Activated CD4-positive, alpha-beta T cell treated with anti-CD3 and anti-CD28 coated beads, Interleukin-2, amount 10 ng/mL, durations not matched to agents 24 days and 14 days (primary cell): ENCODE measurements at regions of chr19 and their contacts with region 1.

Region 1: DNA sequence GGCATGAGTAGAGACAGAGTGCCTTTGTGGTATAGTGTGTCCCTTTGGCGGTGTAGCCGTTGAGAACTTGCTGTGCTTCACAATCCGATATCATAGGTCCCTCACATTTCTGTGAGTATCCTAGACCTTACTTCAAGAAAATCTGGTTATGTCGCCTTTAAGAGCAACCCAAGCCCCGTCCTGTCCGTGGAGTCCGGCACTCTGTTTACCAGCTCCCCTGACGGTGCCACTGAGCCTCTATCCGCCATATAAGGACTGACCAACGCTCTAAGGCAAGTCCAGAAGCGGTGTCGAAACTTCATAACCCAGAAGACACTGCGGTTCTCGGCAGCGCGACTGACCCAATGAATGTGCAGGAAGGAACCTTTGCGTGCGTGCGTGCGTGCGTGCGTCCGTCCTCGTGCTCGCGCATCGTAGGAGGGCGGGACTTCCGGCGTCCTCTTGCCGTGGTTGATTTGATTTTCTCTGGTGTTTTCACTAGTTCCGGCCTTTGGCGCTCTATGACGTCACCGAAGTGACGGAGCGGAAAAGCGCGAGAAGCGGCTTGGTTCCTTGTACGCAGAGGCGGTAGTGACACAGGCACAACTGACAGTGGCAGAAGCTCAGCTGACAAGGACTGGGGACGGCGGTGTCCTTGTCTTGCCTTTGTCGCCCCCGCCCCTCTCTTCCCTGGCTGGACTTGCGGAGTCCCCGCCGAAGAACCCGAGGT is at the starts of genes TRAPPC2B and ZNF547:
- DNase-seq: peak; percentile 100
- H3K4me3 Mint-ChIP-seq: peak within 1 kb of the TSS; percentile 87
- H3K27ac Mint-ChIP-seq: peak within 1 kb of the TSS; percentile 92
- H3K4me1 Mint-ChIP-seq: peaks cover 14% of the 10 kb centered on the region
- H3K27me3 Mint-ChIP-seq: peaks cover 3% of the 10 kb centered on the region
- total RNA-seq, gene TRAPPC2B: 4.1 and 4.3 TPM in 2 replicates
- total RNA-seq, gene ZNF547: 1.3 and 1.6 TPM in 2 replicates

Region 2: DNA sequence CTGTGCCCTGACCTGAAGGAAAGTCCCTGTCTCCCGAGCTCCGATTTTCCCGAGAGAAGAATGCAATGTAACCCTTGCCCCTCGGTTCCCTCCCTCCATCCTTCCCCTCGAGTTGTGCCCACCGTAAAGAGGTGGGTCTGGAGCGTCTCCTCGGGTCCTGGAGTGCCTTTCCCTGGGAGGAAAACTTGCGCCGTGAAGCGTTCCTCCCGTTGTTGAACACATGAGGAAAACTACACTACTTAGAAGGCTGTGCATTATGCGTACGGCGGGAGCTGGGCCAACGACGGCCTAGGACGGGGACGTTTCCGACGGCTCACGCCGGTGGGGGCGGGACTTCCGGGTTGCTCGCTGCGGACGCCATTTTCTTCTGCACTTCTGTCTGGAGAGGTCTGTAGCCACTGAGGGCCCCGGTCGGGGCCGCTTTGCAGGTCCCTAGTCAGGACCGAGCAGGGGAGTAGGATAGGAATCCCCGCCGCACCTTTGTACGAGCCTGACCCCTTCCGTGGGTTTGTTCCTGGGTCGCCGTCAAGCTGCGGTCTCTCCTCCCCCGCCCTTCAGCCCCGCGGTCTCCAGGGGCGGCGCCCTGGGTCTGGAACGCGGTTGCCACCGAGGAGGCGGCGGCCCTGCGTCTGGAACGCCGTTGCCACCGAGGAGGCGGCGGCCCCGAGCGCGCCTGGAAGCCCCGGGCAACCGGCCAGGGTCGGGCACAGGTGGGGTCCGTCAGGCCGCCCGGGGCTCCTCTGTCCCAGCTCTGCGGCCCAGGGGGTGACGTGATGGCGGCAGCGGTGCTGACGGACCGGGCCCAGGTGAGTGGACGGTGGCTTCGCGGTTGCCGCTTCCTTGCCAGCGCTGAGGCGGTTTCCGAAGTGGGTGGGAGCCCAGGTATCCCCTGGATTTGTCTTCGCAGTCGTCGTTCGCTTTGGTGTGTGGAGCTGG is 171.7 kb before region 1 on chr19 and contains the start of gene ZNF264:
- intact Hi-C with region 1: loop called (anchors 1 kb)
- DNase-seq: peak; percentile 97
- H3K4me3 Mint-ChIP-seq: peak within 1 kb of the TSS; percentile 93
- H3K27ac Mint-ChIP-seq: peak within 1 kb of the TSS; percentile 85
- H3K4me1 Mint-ChIP-seq: peaks cover 20% of the 10 kb centered on the region
- H3K27me3 Mint-ChIP-seq: no peaks in the 10 kb centered on the region
- total RNA-seq, gene ZNF264: 18.0 and 19.9 TPM in 2 replicates

Region 3: GRCh38 chr19:57279418-57280066 is 83.6 kb before region 1 on chr19:
- intact Hi-C with region 1: loop called (anchors 1 kb)
- DNase-seq: peak; percentile 93
- H3K4me3 Mint-ChIP-seq: no peak overlapping the region
- H3K27ac Mint-ChIP-seq: no peak overlapping the region
- H3K4me1 Mint-ChIP-seq: peaks cover 24% of the 10 kb centered on the region
- H3K27me3 Mint-ChIP-seq: no peaks in the 10 kb centered on the region

Region 4: DNA sequence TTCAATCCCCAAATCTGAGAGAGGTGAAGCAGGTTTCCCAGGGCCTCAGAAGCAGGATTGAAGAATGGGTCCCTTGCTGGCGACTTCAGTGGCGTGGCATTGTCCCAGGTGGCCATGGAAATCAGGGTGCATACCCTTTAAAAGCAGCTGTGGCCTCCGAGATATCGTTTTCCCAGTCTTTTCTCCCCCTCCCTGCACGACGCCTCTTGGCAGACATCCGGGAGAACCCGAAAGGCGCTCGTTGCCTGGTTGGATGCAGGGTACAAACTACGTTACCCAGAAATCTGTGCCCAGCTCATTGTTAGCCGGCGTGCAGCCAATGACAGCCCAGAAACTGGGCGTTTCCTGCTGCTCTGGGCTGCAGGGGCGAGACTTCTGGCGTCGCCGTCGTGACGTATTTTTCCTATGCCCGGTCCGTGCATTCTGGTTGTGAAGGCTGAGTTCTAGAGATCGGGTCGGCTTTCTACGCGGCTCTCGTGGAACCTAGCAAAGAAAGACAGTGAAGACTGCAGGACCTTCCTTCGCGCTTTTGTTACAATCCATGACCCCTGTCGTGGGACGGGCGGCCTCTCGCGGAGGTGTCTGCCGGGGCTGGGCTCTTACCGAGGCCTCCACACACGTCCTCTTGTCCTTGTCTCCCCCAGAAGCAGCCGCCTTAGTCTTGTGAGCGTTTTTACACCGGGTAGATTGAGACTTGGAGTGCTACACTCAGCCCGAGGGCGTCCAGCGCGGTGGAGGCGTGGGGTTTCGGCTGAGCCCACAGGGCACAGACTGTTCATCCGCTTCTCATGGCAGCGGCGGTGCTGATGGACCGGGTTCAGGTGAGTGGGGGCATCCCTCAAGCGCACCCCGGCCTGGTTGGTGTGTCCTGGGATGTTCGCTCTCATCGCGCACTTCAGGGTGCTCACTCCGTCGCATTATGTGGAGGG is 12.0 kb before region 1 on chr19 and contains the start of gene ZNF304:
- intact Hi-C with region 1: loop called (anchors 1 kb)
- DNase-seq: peak; percentile 96
- H3K4me3 Mint-ChIP-seq: peak within 1 kb of the TSS; percentile 93
- H3K27ac Mint-ChIP-seq: peak within 1 kb of the TSS; percentile 91
- H3K4me1 Mint-ChIP-seq: peaks cover 29% of the 10 kb centered on the region
- H3K27me3 Mint-ChIP-seq: no peaks in the 10 kb centered on the region
- total RNA-seq, gene ZNF304: 5.3 and 5.8 TPM in 2 replicates